ENCODE measurements at regions of chr1 and their contacts with region 1.

Region 1: DNA sequence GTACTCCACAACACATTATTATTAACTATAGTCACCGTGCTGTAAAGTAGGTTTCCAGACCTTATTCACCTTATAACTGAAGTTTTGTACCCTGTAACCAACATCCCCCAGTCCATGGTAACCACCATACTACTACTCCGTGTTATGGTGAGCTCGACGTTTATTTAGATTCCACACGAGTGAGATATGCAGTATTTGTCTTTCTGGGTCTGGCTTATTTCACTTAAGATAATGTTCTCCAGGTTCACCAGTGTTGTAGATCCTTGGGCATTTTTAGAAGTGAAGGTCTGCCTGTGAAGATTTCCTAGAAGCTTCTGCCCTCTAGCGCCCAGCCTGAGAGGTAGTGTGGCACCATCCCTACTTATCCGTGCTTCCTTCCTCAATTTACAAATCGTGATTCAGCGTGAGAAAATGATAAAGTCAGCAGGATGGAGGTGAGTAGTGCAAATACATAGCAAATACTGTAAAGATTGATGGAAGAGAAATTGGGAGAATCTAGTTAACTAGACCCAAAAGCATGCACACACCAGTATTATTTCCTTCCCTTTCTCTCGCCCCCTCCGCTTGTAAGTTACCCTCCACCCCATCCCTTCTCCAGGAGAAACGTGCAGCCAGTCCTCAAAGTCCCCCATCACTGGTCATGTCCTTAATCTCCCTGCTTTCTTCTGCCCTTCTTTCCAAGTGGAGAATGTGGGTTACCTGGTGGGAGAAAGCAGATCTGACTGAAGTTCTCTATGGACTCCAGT is 36.0 kb upstream of the DISC1 start:
- DNase-seq: peak; percentile 44
- CTCF ChIP-seq: peak; percentile 78

Region 2: DNA sequence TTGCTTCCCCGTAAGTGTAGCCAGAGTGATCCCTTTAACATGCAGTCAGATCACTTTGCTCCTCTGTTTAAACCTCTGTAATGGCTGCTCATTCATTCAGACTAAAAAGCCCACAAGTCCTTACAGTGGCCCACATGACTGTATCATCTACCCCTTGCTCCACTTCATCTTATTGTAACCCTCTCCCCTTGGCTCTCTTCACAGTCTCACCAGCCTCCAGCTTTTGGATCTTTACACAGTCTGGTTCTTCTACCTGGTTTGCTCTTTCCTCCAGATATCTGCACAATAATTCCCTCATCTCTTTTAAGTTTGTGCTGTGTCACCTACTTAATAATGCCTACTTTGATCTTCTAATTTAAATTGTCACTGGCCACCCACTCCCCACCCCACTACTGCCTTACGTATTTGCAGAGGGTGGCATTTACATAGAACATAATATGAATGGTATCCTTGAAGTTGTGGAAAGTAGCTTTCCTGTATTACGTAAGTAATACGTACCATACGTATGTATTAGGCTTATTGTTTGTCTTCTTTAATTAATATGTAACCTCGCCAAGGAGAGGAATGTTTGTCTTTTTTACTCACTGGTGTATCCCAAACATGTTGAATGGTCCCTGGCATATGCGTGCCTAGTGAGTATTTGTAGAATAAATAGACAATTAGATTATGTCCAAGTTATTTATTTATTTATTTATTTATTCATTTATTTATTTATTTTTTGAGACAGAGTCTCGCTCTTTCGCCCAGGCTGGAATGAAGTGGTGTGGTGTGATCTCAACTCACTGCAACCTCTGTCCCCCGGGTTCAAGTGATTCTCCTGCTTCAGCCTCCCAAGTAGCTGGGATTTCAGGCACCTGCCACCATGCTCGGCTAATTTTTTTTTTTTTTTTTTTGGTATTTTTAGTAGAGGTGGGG is 13.6 kb before region 1 on chr1:
- CTCF ChIA-PET with region 1: interaction called, 13 read pairs
- POLR2A ChIA-PET with region 1: no interaction called
- DNase-seq: no peak
- CTCF ChIP-seq: no peak